K562 (cell line): ENCODE measurements at regions of chr6 and their contacts with region 1.

Region 1: GRCh38 chr6:112049996-112050395 is 3.9 kb upstream of the CCN6 start:
- DNase-seq: no peak
- ATAC-seq: no peak
- H3K4me3 ChIP-seq: no peak overlapping the region
- H3K27ac ChIP-seq: no peak overlapping the region
- H3K4me1 ChIP-seq: peaks cover 0 to 5% of the 10 kb centered on the region in 2 experiments; a peak in 1 of 5 replicates
- H3K27me3 ChIP-seq: peaks cover 18 to 35% of the 10 kb centered on the region in 2 experiments
- CTCF ChIP-seq: no peak
- EP300 ChIP-seq: no peak
- POLR2A ChIP-seq: no peak
- RAD21 ChIP-seq: no peak

Region 2: GRCh38 chr6:112065426-112065986 is 15.5 kb after region 1 on chr6:
- CTCF ChIA-PET with region 1: no interaction called
- POLR2A ChIA-PET with region 1: interaction called, 10 read pairs
- in situ Hi-C with region 1: no loop called
- intact Hi-C with region 1: no loop called
- DNase-seq: no peak
- ATAC-seq: no peak
- H3K4me3 ChIP-seq: no peak overlapping the region
- H3K27ac ChIP-seq: no peak overlapping the region
- H3K4me1 ChIP-seq: no peaks in the 10 kb centered on the region
- H3K27me3 ChIP-seq: peaks cover 0 to 4% of the 10 kb centered on the region in 2 experiments; a peak in 2 of 5 replicates
- CTCF ChIP-seq: no peak
- EP300 ChIP-seq: no peak
- POLR2A ChIP-seq: no peak
- RAD21 ChIP-seq: no peak